Activated B cell treated with CpG ODN at 0.5 μM for 24 hours (primary cell): ENCODE measurements at regions of chr9 and their contacts with region 1.

Region 1: GRCh38 chr9:38178237-38178636 is 109.2 kb upstream of the SHB start:
- DNase-seq: no peak
- ATAC-seq: no peak
- H3K4me3 Mint-ChIP-seq: no peak overlapping the region
- H3K27ac Mint-ChIP-seq: no peak overlapping the region
- H3K4me1 Mint-ChIP-seq: peaks cover 4% of the 10 kb centered on the region
- H3K27me3 Mint-ChIP-seq: peaks cover 2% of the 10 kb centered on the region
- CTCF ChIP-seq: no peak

Region 2: GRCh38 chr9:38392235-38393127 is 214.2 kb after region 1 on chr9 and contains the start of gene ALDH1B1:
- CTCF ChIA-PET with region 1: no interaction called
- POLR2A ChIA-PET with region 1: interaction called, 10 read pairs
- intact Hi-C with region 1: no loop called
- DNase-seq: peak; percentile 74
- ATAC-seq: peak; percentile 99
- H3K4me3 Mint-ChIP-seq: peak within 1 kb of the TSS; percentile 94
- H3K27ac Mint-ChIP-seq: peak within 1 kb of the TSS; percentile 79
- H3K4me1 Mint-ChIP-seq: peaks cover 16% of the 10 kb centered on the region
- H3K27me3 Mint-ChIP-seq: peaks cover 6% of the 10 kb centered on the region
- CTCF ChIP-seq: no peak
- total RNA-seq, gene ALDH1B1: 9.0 and 9.8 TPM in 2 replicates